ENCODE measurements at regions of chr2 and their contacts with region 1.

Region 1: GRCh38 chr2:8681786-8682692 is at the start of gene ID2:
- DNase-seq: peak; percentile 99
- ATAC-seq: peak; percentile 73
- H3K4me3 Mint-ChIP-seq: peak within 1 kb of the TSS; percentile 98
- H3K27ac Mint-ChIP-seq: peak within 1 kb of the TSS; percentile 97
- H3K4me1 Mint-ChIP-seq: peaks cover 34% of the 10 kb centered on the region
- H3K27me3 Mint-ChIP-seq: peaks cover 10% of the 10 kb centered on the region
- total RNA-seq, gene ID2: 171 to 213 TPM

Region 2: GRCh38 chr2:7118606-7119503 is 1563.2 kb before region 1 on chr2:
- CTCF ChIA-PET with region 1: no interaction called
- POLR2A ChIA-PET with region 1: no interaction called
- intact Hi-C with region 1: loop called in 1 of 2 experiments (anchors 1 kb)
- DNase-seq: peak; percentile 44
- ATAC-seq: no peak
- H3K4me3 Mint-ChIP-seq: no peak overlapping the region
- H3K27ac Mint-ChIP-seq: no peak overlapping the region
- H3K4me1 Mint-ChIP-seq: no peaks in the 10 kb centered on the region
- H3K27me3 Mint-ChIP-seq: no peaks in the 10 kb centered on the region

Region 3: GRCh38 chr2:7758073-7758759 is 923.8 kb before region 1 on chr2:
- CTCF ChIA-PET with region 1: no interaction called
- POLR2A ChIA-PET with region 1: interaction called, 3 read pairs
- intact Hi-C with region 1: loop called in 1 of 2 experiments (anchors 5 kb)
- DNase-seq: no peak
- ATAC-seq: peak; percentile 82
- H3K4me3 Mint-ChIP-seq: no peak overlapping the region
- H3K27ac Mint-ChIP-seq: peak overlapping the region; percentile 62
- H3K4me1 Mint-ChIP-seq: peaks cover 16% of the 10 kb centered on the region
- H3K27me3 Mint-ChIP-seq: peaks cover 14% of the 10 kb centered on the region

Region 4: GRCh38 chr2:8152392-8153257 is 529.4 kb before region 1 on chr2:
- CTCF ChIA-PET with region 1: interaction called, 3 read pairs
- POLR2A ChIA-PET with region 1: interaction called, 4 read pairs
- intact Hi-C with region 1: loop called (anchors 1 to 10 kb)
- DNase-seq: no peak
- ATAC-seq: no peak
- H3K4me3 Mint-ChIP-seq: no peak overlapping the region
- H3K27ac Mint-ChIP-seq: no peak overlapping the region
- H3K4me1 Mint-ChIP-seq: peaks cover 30% of the 10 kb centered on the region
- H3K27me3 Mint-ChIP-seq: no peaks in the 10 kb centered on the region

Region 5: GRCh38 chr2:8488001-8488738 is 193.9 kb before region 1 on chr2:
- CTCF ChIA-PET with region 1: no interaction called
- POLR2A ChIA-PET with region 1: interaction called, 11 read pairs
- intact Hi-C with region 1: loop called (anchors 1 to 5 kb)
- DNase-seq: peak; percentile 80
- ATAC-seq: peak; percentile 85
- H3K4me3 Mint-ChIP-seq: peak overlapping the region; percentile 72
- H3K27ac Mint-ChIP-seq: peak overlapping the region; percentile 86
- H3K4me1 Mint-ChIP-seq: peaks cover 49% of the 10 kb centered on the region
- H3K27me3 Mint-ChIP-seq: no peaks in the 10 kb centered on the region

Region 6: GRCh38 chr2:8704906-8705305 is 22.9 kb after region 1 on chr2:
- CTCF ChIA-PET with region 1: no interaction called
- POLR2A ChIA-PET with region 1: no interaction called
- intact Hi-C with region 1: no loop called
- DNase-seq: no peak
- ATAC-seq: no peak
- H3K4me3 Mint-ChIP-seq: no peak overlapping the region
- H3K27ac Mint-ChIP-seq: no peak overlapping the region
- H3K4me1 Mint-ChIP-seq: no peaks in the 10 kb centered on the region
- H3K27me3 Mint-ChIP-seq: no peaks in the 10 kb centered on the region

Region 7: DNA sequence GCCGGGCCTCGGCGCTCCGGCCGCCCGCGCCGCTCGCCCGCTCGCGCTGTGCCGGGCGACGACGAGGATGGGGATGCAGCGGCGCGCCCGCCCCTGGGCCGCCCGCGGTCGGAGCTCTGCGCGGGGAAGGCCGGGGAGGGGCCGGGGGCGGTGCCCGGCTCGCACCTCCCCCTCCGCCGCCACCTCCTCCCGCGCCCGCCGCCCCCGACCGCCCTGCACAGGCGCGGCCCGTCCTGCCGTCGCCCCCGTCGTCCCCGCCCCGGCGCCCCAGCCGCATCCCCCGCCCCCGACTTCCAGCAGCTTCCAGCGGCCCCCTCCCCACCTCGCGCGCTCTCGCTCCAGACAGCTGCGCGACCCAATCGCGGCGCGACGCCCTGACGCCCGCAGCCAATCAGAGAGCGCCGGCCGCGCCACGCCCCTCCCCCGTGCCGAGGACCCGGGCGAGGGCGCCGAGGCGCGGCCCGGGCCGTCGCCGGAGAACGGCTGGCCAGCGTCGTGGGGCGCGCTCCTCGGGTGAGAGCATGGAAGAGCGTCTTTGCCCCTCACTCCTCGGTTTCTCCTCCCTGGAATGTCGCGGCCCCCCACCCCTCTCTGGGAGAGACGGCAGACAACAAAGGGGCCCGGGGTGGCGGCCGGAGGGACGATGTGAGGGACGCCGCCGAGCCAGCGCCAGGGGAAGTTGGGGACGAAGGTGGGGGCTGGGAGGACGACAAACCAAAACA is 321.7 kb after region 1 on chr2 and contains the start of gene MBOAT2:
- CTCF ChIA-PET with region 1: no interaction called
- POLR2A ChIA-PET with region 1: no interaction called
- intact Hi-C with region 1: loop called in 1 of 2 experiments (anchors 5 kb)
- DNase-seq: peak; percentile 89
- ATAC-seq: peak; percentile 96
- H3K4me3 Mint-ChIP-seq: peak within 1 kb of the TSS; percentile 75
- H3K27ac Mint-ChIP-seq: peak within 1 kb of the TSS; percentile 64
- H3K4me1 Mint-ChIP-seq: peaks cover 11% of the 10 kb centered on the region
- H3K27me3 Mint-ChIP-seq: peaks cover 6% of the 10 kb centered on the region
- total RNA-seq, gene MBOAT2: 4.7 to 6.9 TPM